ENCODE measurements at regions of chr11 and their contacts with region 1.

Region 1: DNA sequence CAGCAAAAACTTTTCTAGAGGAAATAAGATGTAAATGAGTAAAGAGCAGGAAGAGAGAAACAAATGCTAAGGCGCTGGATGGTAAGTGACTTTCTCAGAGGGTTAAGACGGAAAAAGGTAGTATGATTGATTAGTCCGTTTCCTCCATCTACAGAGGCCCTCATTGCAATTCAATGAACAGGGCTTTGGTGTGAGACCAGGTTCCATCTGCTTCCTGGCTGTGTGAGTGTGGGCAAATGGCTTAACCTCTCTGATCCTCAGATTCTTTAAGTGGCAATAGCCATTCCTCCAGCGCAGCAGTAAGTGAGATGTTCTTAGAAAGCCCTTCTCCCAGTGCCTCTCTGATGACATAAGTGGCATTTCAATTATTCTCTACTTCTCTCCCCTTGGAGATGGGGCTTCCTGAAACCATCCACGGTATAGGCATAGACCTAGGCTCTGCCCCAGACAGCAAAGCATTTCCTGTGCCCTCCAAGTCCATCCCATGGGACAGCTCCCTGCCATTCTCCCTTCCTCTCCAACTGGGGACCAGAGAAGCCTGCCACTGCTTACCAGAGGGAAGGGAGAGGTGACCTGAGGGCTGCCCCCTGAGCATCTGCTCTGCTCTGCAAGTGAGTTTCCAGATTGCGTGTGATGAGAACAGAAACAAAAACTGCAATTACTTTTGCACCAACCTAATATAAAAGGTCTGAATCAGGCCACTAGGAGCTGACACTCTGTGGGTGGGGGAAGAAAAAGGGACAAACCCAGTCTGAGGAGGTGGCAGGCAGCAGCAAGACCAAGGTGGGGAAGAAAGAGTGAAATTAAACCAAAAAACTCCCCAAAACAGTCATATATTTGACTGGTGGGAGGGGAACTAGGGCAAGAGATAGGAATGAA is 12.7 kb upstream of the CD44 start:
- DNase-seq: no peak
- ATAC-seq: no peak
- H3K4me3 ChIP-seq: no peak overlapping the region
- H3K27ac ChIP-seq: no peak overlapping the region
- H3K4me1 ChIP-seq: peaks cover 0 to 13% (median 0%) of the 10 kb centered on the region in 9 donors
- H3K27me3 ChIP-seq: no peaks in the 10 kb centered on the region
- CTCF ChIP-seq: no peak

Region 2: GRCh38 chr11:34997952-34998528 is 128.2 kb before region 1 on chr11:
- intact Hi-C with region 1: no loop called
- DNase-seq: no peak
- ATAC-seq: peak in 3 of 8 donors; percentile 34 to 56 (median 43)
- H3K4me3 ChIP-seq: no peak overlapping the region
- H3K27ac ChIP-seq: peak overlapping the region in 1 of 10 donors; percentile 7
- H3K4me1 ChIP-seq: peaks cover 0 to 24% (median 0%) of the 10 kb centered on the region in 9 donors
- H3K27me3 ChIP-seq: no peaks in the 10 kb centered on the region
- CTCF ChIP-seq: peak; percentile 4 to 73 (median 55)

Region 3: GRCh38 chr11:35151683-35152280 is 25.5 kb after region 1 on chr11:
- intact Hi-C with region 1: loop called in 1 of 10 experiments (anchors 2 kb)
- DNase-seq: no peak
- ATAC-seq: no peak
- H3K4me3 ChIP-seq: no peak overlapping the region
- H3K27ac ChIP-seq: peak overlapping the region in 1 of 10 donors; percentile 42
- H3K4me1 ChIP-seq: peaks cover 0 to 85% (median 4%) of the 10 kb centered on the region in 9 donors
- H3K27me3 ChIP-seq: no peaks in the 10 kb centered on the region
- CTCF ChIP-seq: no peak

Region 4: DNA sequence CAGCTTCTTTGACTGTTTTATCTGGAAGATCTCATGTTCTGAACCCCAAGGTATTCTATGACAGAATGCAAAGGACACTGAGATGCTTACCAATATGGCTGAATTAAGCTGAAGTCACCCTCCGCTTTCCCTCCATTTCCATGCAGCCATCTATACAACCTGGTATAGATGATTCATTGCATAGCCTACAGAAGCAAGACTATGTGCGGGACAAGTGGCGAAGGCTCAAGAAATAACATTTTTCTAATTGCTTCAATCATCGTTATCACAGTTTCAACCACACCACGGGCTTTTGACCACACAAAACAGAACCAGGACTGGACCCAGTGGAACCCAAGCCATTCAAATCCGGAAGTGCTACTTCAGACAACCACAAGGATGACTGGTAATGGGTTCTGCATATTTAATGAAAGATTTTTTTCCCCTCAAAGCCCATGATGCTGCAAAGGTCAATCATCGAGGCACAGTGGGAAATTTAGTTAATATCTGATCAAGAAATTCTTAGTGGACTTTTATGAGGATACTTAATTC is 74.6 kb after region 1 on chr11:
- intact Hi-C with region 1: no loop called
- DNase-seq: no peak
- ATAC-seq: no peak
- H3K4me3 ChIP-seq: no peak overlapping the region
- H3K27ac ChIP-seq: no peak overlapping the region
- H3K4me1 ChIP-seq: peaks cover 0 to 4% (median 0%) of the 10 kb centered on the region in 9 donors
- H3K27me3 ChIP-seq: no peaks in the 10 kb centered on the region
- CTCF ChIP-seq: no peak

Region 5: GRCh38 chr11:35246745-35247144 is 120.5 kb after region 1 on chr11:
- intact Hi-C with region 1: no loop called
- DNase-seq: peak in 1 of 2 donors; percentile 60
- ATAC-seq: peak; percentile 55 to 96 (median 92)
- H3K4me3 ChIP-seq: no peak overlapping the region
- H3K27ac ChIP-seq: peak overlapping the region; percentile 8 to 88 (median 72)
- H3K4me1 ChIP-seq: peaks cover 0 to 34% (median 10%) of the 10 kb centered on the region in 9 donors
- H3K27me3 ChIP-seq: no peaks in the 10 kb centered on the region
- CTCF ChIP-seq: no peak

Measured in heart right ventricle (tissue), 16 donors.